Right lobe of liver (tissue), 6 donors: ENCODE measurements at regions of chr14 and their contacts with region 1.

Region 1: DNA sequence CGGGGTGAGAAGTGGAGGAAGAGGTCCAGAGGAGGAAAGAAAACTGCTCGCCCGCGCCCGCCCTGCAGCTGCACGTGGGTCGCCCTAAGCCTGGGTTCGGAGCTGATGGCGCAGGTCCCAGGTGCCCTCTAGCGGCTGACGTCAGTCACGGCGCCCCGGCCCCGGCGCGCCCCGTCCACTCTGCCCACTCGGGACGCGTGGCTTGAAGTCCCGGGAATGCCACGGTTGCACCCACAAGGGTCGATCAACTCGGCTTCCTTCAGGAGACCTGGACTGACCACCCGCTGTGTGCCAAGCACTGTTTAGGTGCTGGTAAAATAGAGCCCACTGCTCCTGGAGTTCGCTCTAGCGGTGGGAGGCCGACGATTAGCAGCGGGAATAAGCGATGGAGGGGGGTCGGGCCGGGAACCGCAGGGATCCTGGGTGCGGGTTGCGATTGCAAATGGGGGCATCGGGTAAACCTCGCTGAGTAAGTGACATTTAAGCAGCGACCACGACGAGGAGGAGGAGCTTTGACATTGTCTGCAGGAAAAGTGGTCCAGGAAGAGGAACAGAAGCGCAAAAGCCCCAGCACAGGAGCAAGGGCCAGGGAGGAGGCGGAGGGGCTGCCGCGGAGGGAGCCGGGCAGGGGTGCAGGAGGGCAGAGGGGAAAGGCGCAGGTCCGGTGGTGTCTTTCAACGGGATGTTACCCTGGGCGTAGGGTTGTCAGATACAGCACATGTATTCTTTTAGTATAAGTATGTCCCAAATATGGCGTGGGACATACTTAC is 5.1 kb upstream of the ZNF839 start:
- DNase-seq: peak; percentile 89 to 90 (median 90)
- ATAC-seq: peak; percentile 80 to 88 (median 82)
- H3K4me3 ChIP-seq: peak overlapping the region; percentile 43 to 50 (median 47)
- H3K27ac ChIP-seq: peak overlapping the region in 1 of 3 donors; percentile 5
- H3K4me1 ChIP-seq: peaks cover 0 to 18% (median 3%) of the 10 kb centered on the region in 4 donors
- H3K27me3 ChIP-seq: no peaks in the 10 kb centered on the region
- CTCF ChIP-seq: peak; percentile 93 to 96 (median 96)
- POLR2A ChIP-seq: no peak

Region 2: GRCh38 chr14:102234331-102235264 is 79.8 kb before region 1 on chr14:
- intact Hi-C with region 1: loop called (anchors 5 kb)
- DNase-seq: no peak
- ATAC-seq: peak in 1 of 4 donors; percentile 9
- H3K4me3 ChIP-seq: no peak overlapping the region
- H3K27ac ChIP-seq: no peak overlapping the region
- H3K4me1 ChIP-seq: no peaks in the 10 kb centered on the region
- H3K27me3 ChIP-seq: no peaks in the 10 kb centered on the region
- CTCF ChIP-seq: no peak
- POLR2A ChIP-seq: no peak

Region 3: DNA sequence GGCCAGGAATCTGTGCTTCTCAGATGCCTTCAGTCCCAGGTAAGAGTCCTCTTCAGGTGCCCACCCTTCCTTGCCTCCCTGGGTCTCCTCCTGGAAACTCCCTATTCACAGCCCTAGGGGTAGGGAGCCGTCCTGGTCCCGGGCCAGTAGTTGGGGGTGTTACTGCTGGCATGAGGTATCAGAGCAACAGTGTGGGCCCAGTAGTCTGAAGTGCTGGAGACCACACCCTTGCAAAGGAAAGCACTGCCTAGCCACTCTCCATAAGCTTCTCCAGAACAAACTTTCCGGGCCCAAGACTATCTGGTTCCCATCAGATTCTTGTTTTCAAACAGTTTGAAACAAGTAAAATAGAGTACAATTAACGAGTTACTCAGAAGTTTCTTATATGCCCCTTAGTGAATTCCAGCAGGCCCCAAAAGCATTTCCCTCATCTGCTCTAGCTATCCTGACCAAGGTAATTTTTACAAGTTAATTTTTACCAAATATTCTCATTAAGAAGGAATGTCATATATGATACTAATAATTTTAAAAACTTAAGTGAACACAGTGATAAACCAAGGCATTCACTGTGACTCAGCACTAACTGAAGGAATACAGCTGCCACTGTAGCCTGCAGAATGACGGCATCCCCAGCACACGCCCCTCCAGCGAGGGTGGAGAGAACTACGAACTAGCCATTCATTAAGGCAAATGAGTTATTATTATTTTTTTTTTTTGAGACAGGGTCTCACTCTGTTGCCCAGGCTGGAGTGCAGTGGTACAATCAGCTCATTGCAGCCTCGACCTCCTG is 58.8 kb before region 1 on chr14:
- intact Hi-C with region 1: no loop called
- DNase-seq: no peak
- ATAC-seq: no peak
- H3K4me3 ChIP-seq: no peak overlapping the region
- H3K27ac ChIP-seq: no peak overlapping the region
- H3K4me1 ChIP-seq: no peaks in the 10 kb centered on the region
- H3K27me3 ChIP-seq: no peaks in the 10 kb centered on the region
- CTCF ChIP-seq: no peak
- POLR2A ChIP-seq: no peak

Region 4: DNA sequence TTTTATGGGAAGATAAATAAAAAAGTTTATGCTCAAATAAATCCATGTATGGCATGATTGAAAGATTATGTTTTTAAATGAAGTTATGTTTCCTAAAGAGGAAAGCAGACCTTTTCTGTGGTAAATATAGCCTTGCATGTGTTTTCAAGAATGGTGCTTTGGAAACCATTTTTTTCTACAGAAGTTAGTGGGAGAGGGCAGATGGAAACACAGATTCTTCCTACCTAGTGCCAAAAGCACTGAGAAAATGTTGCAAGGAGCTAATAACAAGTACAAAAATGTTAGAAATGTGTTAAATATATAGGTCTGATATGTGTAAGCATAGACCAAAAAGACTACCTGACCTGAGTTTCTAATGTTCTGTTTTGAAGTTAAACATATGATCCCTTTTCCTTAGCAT is 72.7 kb after region 1 on chr14:
- intact Hi-C with region 1: no loop called
- DNase-seq: no peak
- ATAC-seq: no peak
- H3K4me3 ChIP-seq: no peak overlapping the region
- H3K27ac ChIP-seq: no peak overlapping the region
- H3K4me1 ChIP-seq: no peaks in the 10 kb centered on the region
- H3K27me3 ChIP-seq: no peaks in the 10 kb centered on the region
- CTCF ChIP-seq: no peak
- POLR2A ChIP-seq: no peak